Aorta (tissue), 5 donors: ENCODE measurements at regions of chr7 and their contacts with region 1.

Region 1: DNA sequence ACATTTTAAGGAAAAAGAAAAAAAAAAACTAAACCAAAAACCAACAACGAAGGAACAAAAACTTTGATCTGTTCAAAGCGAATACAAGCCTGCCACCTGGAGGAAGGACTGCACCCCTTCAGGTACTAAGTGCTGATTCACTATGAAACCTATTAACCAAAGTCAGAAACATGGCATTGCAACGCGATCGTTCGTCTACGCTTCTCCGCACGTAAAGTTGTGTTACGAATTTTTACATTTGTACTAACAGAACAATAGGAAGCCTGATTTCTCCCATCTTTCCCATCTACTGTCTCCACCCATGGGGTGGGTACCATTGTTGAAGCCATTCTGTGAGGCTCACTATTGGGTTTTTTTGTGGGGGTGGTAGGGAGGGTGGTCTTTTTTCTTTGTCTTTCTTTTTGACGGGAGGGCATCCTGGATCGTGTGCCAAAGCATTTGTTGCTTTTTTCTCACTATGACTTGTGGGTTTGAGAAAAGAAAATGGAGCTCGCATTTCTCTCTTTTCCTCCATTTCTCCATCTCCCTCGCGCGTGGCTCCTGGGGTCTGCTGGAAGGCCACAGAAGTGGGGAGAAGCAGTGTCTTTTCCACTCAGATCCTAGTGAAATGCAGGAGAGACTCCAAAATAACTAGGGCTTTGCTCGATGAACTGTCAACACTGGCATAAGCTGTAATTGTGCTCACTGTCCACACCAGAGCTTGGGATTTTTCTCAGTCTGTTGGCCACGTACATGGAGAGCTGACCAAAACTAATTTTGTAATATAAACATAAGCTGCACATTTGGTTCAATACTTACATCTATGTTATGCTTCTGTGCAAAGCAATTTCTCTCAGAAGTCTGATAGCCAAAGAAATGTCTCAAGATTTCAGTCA is 100.9 kb upstream of the YAE1 start:
- DNase-seq: peak in 1 of 2 donors; percentile 56
- ATAC-seq: peak; percentile 70
- H3K4me3 ChIP-seq: peak overlapping the region in 1 of 2 donors; percentile 34
- H3K27ac ChIP-seq: no peak overlapping the region
- H3K4me1 ChIP-seq: no peaks in the 10 kb centered on the region
- H3K27me3 ChIP-seq: no peaks in the 10 kb centered on the region

Region 2: GRCh38 chr7:38318803-38319416 is 1146.4 kb before region 1 on chr7:
- intact Hi-C with region 1: no loop called
- DNase-seq: no peak
- ATAC-seq: peak; percentile 61
- H3K4me3 ChIP-seq: no peak overlapping the region
- H3K27ac ChIP-seq: no peak overlapping the region
- H3K4me1 ChIP-seq: no peaks in the 10 kb centered on the region
- H3K27me3 ChIP-seq: no peaks in the 10 kb centered on the region

Region 3: DNA sequence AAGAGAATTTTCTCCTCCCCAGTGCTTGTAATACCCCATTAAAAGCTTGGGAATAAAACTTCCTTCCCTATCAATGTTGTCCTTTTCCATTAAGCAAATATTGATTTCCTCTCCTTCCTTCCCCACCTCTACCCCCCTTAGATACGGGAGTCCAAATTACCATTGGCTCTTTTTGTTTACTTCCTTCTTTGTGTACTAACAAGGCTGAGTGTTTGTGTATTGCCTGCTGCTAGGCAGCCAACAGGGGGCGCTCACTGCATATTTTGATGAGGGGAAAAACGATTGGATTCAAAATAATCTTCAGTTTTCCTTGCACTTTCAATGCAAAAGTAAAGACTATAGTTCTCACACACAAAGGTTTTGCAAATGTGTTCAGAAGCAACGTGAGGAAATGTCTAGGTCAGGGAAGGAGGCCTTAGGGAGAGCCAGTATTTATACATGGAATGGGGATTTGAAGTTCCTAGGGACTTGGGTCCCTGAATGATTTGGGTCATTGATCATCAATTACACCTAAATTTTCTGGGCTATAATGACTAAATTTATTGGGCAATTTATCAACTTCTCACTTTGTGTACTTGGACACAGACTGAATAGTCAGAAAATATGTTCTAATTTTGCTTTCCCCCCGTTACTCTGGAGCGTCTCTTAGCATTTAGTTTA is 532.7 kb before region 1 on chr7:
- intact Hi-C with region 1: loop called (anchors 1 to 2 kb)
- DNase-seq: peak; percentile 78 to 93
- ATAC-seq: peak; percentile 44
- H3K4me3 ChIP-seq: no peak overlapping the region
- H3K27ac ChIP-seq: no peak overlapping the region
- H3K4me1 ChIP-seq: peaks cover 0 to 2% of the 10 kb centered on the region in 2 donors
- H3K27me3 ChIP-seq: no peaks in the 10 kb centered on the region

Region 4: GRCh38 chr7:39051707-39052106 is 413.6 kb before region 1 on chr7:
- intact Hi-C with region 1: no loop called
- DNase-seq: no peak
- ATAC-seq: no peak
- H3K4me3 ChIP-seq: no peak overlapping the region
- H3K27ac ChIP-seq: no peak overlapping the region
- H3K4me1 ChIP-seq: no peaks in the 10 kb centered on the region
- H3K27me3 ChIP-seq: no peaks in the 10 kb centered on the region

Region 5: DNA sequence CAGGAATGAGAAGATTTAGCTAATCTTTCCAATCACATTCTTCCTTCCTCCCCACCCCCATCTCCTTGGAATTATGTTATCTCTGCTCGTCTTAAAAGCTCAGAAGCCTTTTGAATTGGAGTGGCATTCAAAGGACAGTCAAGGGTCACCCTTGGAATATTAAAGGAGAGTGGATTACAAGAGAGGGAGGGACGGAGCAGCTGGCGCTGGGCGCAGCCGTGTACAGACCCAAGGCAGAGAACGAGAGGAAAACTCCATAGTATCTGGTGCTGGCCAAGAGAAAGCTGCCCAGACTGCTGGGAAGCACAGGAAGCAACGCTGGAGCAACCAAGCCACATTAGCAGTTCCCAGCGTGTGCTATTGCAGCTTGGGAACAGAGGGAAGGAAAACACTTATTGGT is 391.9 kb before region 1 on chr7:
- intact Hi-C with region 1: loop called in 1 of 2 experiments (anchors 10 kb)
- DNase-seq: no peak
- ATAC-seq: peak; percentile 77
- H3K4me3 ChIP-seq: no peak overlapping the region
- H3K27ac ChIP-seq: no peak overlapping the region
- H3K4me1 ChIP-seq: no peaks in the 10 kb centered on the region
- H3K27me3 ChIP-seq: no peaks in the 10 kb centered on the region

Region 6: GRCh38 chr7:39084349-39084748 is 380.9 kb before region 1 on chr7:
- intact Hi-C with region 1: loop called (anchors 5 to 10 kb)
- DNase-seq: no peak
- ATAC-seq: no peak
- H3K4me3 ChIP-seq: no peak overlapping the region
- H3K27ac ChIP-seq: no peak overlapping the region
- H3K4me1 ChIP-seq: no peaks in the 10 kb centered on the region
- H3K27me3 ChIP-seq: no peaks in the 10 kb centered on the region

Region 7: DNA sequence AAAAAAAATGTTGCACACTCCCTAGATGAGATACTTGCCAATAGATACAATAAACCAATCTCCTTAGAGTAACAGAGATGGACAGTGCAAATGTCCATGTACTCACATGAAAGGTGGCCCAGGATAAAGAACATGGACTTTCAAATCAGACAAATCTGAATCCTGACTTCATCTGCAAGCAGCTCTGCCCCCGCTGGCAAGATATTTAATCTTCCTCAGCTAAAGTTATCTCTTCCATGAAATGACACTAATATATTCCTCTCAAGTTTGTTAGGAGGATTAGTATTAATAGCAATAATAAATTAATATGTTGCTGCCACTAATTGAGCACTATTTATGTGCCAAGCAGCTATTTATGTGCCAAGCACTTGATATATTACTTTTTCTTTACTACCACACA is 47.6 kb before region 1 on chr7:
- intact Hi-C with region 1: no loop called
- DNase-seq: no peak
- ATAC-seq: no peak
- H3K4me3 ChIP-seq: no peak overlapping the region
- H3K27ac ChIP-seq: no peak overlapping the region
- H3K4me1 ChIP-seq: no peaks in the 10 kb centered on the region
- H3K27me3 ChIP-seq: no peaks in the 10 kb centered on the region